ENCODE measurements at regions of chr10 and their contacts with region 1.

Region 1: DNA sequence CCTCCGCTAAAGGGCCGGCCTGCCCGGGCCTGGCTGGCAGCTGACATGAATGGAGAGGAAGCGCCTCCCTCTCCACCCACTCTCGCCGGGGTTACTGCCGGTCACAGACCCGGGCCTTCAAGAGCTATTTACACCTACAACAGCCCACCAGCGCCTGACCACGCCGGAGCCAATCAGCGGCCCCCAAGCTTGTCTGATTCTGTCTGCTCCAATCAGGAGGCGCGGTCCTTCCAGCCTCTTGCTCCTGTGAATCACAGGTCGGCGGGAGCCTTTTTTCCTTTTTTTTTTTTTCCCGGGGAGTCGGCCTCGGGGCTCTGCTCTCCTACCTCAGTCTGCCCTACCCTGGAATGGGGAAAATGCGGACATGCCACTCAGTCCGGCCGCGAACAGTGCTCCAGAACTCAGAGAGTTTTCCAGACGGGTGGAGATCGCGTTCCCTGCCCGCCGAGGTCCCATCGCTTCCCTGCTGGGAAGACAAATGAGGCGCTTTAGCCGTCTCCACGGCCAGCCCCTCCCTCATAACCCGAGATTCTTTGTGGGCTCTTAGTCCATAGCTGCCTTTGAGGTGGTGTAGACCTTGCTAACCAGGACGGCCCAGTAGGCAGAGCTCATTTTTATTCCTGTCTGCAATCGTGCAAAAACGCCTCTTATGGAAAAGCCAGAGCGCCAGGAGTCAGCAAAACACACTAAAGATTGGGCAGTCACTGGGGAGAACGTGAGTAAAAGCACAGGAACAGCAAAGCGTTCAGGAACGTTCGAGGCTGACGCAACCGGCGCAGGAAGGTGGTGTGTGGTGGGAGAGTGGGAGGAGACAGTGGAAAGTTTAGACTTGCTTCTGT is 26.5 kb downstream of the SCD start:
- DNase-seq: peak; percentile 99
- ATAC-seq: peak; percentile 92
- H3K4me3 ChIP-seq: peak overlapping the region; percentile 42
- H3K27ac ChIP-seq: peak overlapping the region; percentile 96
- H3K4me1 ChIP-seq: peaks cover 19% of the 10 kb centered on the region
- H3K27me3 ChIP-seq: no peaks in the 10 kb centered on the region
- CTCF ChIP-seq: no peak
- POLR2A ChIP-seq: peak; percentile 86
- RAD21 ChIP-seq: no peak

Region 2: DNA sequence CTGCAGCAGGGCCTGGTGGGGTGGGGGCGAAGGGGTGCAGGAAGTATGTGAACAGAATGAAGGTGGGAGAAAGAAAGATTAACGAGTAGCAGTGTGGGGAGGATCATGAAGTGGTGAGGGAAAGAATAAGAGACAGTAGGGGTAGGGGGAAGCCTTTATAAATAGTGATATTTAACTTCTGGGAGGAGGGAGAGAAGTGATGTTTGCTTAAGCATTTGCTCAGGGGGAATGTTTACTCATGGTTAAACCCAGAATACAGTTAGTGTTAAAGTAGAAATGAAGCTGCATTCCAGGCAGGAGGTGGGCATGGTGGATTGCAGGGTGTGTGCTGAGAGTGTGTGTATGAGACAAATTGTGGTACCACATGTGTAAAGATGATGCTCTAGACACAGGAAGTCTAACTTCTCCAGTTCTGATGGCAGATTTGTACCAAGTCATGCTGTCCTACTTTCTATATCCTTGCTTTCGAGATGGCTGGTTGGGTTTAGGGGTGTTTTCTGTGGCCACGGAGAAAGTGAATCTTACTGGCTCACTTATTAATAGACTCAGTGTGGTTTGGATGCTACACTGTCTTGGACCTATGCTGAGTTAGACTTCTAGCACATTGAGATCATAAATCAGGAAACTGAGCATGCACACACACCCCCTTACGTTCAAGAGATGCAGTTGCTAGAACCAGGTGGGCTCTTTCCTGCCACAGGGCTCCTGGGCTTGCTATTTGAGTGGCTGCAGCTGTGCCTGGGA is 353.2 kb before region 1 on chr10:
- CTCF ChIA-PET with region 1: no interaction called
- POLR2A ChIA-PET with region 1: no interaction called
- dilution Hi-C with region 1: no loop called
- in situ Hi-C with region 1: no loop called
- intact Hi-C with region 1: no loop called
- DNase-seq: no peak
- ATAC-seq: peak; percentile 37; the same call in 1 of the 2 replicates
- H3K4me3 ChIP-seq: no peak overlapping the region
- H3K27ac ChIP-seq: no peak overlapping the region
- H3K4me1 ChIP-seq: no peaks in the 10 kb centered on the region; the same call in 1 of the 2 replicates
- H3K27me3 ChIP-seq: peaks cover 2% of the 10 kb centered on the region
- CTCF ChIP-seq: no peak
- POLR2A ChIP-seq: no peak
- RAD21 ChIP-seq: no peak

Region 3: GRCh38 chr10:100346765-100347567 is 26.6 kb before region 1 on chr10 and contains the start of gene SCD:
- CTCF ChIA-PET with region 1: interaction called, 5 read pairs
- POLR2A ChIA-PET with region 1: interaction called, 4 read pairs
- dilution Hi-C with region 1: no loop called
- in situ Hi-C with region 1: no loop called
- intact Hi-C with region 1: loop called (anchors 2 kb)
- DNase-seq: peak; percentile 88
- ATAC-seq: peak; percentile 89
- H3K4me3 ChIP-seq: peak within 1 kb of the TSS; percentile 92
- H3K27ac ChIP-seq: peak within 1 kb of the TSS; percentile 45
- H3K4me1 ChIP-seq: peaks cover 18% of the 10 kb centered on the region
- H3K27me3 ChIP-seq: no peaks in the 10 kb centered on the region
- CTCF ChIP-seq: no peak
- POLR2A ChIP-seq: peak; percentile 63
- RAD21 ChIP-seq: no peak
- total RNA-seq, gene SCD: 49.2 and 50.7 TPM in 2 replicates

Measured in IMR-90 (cell line).